BJ (cell line): ENCODE measurements at regions of chr1 and their contacts with region 1.

Region 1: GRCh38 chr1:12124693-12125421 is 41.9 kb upstream of the TNFRSF1B start:
- DNase-seq: no peak
- H3K4me3 ChIP-seq: no peak overlapping the region
- H3K27me3 ChIP-seq: peaks cover 5% of the 10 kb centered on the region
- CTCF ChIP-seq: peak; percentile 95

Region 2: GRCh38 chr1:12113433-12114339 is 11.2 kb before region 1 on chr1:
- CTCF ChIA-PET with region 1: interaction called, 15 read pairs
- POLR2A ChIA-PET with region 1: no interaction called
- DNase-seq: no peak
- H3K4me3 ChIP-seq: no peak overlapping the region
- H3K27me3 ChIP-seq: 0 out of 2 replicates have a peak, but pooled peaks cover 1% of the 10 kb centered on the region
- CTCF ChIP-seq: peak; percentile 4; the same call in 1 of the 2 replicates

Region 3: GRCh38 chr1:12184008-12184681 is 59.3 kb after region 1 on chr1:
- CTCF ChIA-PET with region 1: interaction called, 16 read pairs
- POLR2A ChIA-PET with region 1: interaction called, 3 read pairs
- DNase-seq: no peak
- H3K4me3 ChIP-seq: no peak overlapping the region
- H3K27me3 ChIP-seq: peaks cover 5% of the 10 kb centered on the region
- CTCF ChIP-seq: peak; percentile 42

Region 4: DNA sequence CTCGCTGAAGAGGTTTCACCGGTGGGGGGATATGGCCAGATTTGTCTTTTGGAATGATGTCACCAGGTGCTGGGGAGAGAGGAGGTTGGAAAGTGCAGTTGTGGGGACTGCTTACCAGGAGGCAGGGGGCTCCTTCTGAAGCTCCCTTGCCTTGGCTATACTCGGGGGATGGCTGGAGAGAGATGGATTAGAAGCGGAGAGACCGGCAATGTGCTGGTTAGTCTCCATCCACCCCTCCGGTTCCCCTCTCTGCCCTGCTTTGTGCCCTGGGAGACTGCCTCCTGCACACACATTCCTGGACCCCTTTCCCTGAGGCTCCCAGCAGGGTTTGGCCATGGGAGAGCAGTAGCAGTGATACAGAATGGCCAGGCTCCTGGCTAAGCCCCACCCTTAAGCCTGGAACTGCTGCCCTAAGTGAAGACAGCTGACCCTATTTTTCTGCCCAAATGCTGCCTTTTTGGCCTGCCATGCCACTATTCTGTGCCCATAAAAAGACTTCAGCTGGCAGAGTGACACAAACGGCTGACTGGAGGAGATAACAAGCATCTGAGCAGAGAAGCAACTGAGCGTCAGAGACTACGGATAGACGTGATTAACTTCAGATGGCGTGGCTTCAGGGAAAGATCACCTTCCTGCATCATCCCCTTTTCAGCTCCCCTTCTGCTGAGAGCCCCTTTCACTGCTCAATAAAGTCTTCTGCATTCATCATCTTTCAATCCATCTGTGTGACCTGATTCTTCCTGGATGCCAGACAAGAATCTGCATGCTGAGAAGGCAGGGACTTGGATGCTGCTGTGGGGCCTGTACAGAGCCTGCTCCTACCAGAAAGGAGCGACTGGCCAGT is 90.5 kb after region 1 on chr1:
- CTCF ChIA-PET with region 1: interaction called, 359 read pairs
- POLR2A ChIA-PET with region 1: no interaction called
- DNase-seq: no peak
- H3K4me3 ChIP-seq: no peak overlapping the region
- H3K27me3 ChIP-seq: peaks cover 9% of the 10 kb centered on the region
- CTCF ChIP-seq: no peak

Region 5: GRCh38 chr1:12258272-12258671 is 133.4 kb after region 1 on chr1:
- CTCF ChIA-PET with region 1: no interaction called
- POLR2A ChIA-PET with region 1: no interaction called
- DNase-seq: no peak
- H3K4me3 ChIP-seq: no peak overlapping the region
- H3K27me3 ChIP-seq: no peaks in the 10 kb centered on the region
- CTCF ChIP-seq: no peak

Region 6: GRCh38 chr1:12275369-12275768 is 150.5 kb after region 1 on chr1:
- CTCF ChIA-PET with region 1: interaction called, 29 read pairs
- POLR2A ChIA-PET with region 1: no interaction called
- DNase-seq: no peak
- H3K4me3 ChIP-seq: no peak overlapping the region
- H3K27me3 ChIP-seq: no peaks in the 10 kb centered on the region
- CTCF ChIP-seq: peak; percentile 82